Endothelial cell of umbilical vein (primary cell): ENCODE measurements at regions of chr4 and their contacts with region 1.

Region 1: DNA sequence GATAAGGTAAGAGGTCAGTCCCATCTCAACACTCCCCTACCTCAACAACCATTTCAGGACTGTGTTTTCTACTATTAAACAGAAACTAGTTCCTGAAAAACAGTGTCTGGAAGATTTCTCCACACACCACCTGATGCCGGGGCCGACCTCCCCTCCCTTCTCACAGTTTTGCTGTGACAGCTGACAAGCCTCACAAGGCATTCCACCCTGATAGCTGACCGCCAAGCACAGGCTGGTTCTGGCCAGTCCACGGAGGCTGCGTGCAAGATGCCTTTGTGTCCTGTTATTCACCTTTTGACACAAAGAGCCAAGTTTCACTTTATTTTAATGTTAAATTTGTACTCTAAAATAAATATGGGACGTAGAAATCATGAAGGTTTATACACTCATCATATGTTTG is 758.6 kb downstream of the PDHA2 start:
- DNase-seq: no peak
- H3K4me3 ChIP-seq: no peak overlapping the region
- H3K27ac ChIP-seq: no peak overlapping the region
- H3K4me1 ChIP-seq: no peaks in the 10 kb centered on the region
- H3K27me3 ChIP-seq: no peaks in the 10 kb centered on the region
- CTCF ChIP-seq: no peak
- POLR2A ChIP-seq: no peak

Region 2: GRCh38 chr4:94739741-94740140 is 1858.7 kb before region 1 on chr4:
- CTCF ChIA-PET with region 1: no interaction called
- POLR2A ChIA-PET with region 1: no interaction called
- dilution Hi-C with region 1: no loop called
- intact Hi-C with region 1: loop called (anchors 5 kb)
- DNase-seq: no peak
- H3K4me3 ChIP-seq: no peak overlapping the region
- H3K27ac ChIP-seq: no peak overlapping the region
- H3K4me1 ChIP-seq: no peaks in the 10 kb centered on the region
- H3K27me3 ChIP-seq: no peaks in the 10 kb centered on the region
- CTCF ChIP-seq: no peak
- POLR2A ChIP-seq: no peak

Region 3: DNA sequence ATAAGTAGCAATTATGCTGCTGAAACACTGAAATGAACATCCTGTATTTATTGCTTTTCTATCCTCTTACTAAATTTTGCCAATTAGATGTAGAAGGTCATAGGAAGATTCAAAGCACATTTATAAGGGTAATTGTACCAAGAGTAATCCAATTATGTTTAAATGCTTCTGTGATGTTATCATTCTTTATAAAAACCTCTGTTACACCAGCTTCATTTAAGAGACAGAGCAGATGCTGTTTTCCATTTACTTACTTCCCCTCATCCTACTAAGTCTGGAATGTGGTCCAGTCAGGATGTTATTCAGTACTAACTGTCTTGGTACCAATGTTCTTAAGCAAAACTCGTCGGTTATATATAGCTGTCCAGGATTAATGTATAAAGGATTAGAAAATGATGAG is 218.9 kb before region 1 on chr4:
- CTCF ChIA-PET with region 1: no interaction called
- POLR2A ChIA-PET with region 1: no interaction called
- dilution Hi-C with region 1: no loop called
- intact Hi-C with region 1: no loop called
- DNase-seq: no peak
- H3K4me3 ChIP-seq: no peak overlapping the region
- H3K27ac ChIP-seq: no peak overlapping the region
- H3K4me1 ChIP-seq: no peaks in the 10 kb centered on the region
- H3K27me3 ChIP-seq: no peaks in the 10 kb centered on the region
- CTCF ChIP-seq: no peak
- POLR2A ChIP-seq: no peak

Region 4: DNA sequence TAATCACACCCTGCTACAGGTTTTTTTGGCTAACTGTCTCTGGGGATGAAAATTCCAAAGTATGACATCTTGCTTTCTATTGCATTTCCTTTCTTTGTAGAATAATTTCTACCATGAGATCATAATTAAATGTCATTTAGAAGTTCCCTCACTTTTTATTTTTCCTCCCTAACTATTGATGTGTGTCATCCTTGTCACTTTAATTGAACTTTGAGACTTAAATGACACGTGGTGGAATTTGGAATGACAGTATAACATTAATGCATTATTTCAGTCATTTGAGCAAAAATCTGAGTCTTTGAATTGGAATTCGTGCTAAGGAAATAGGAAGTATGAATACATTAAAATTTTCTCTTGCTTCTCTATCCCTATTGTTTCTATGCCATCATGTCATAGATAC is 13.2 kb before region 1 on chr4:
- CTCF ChIA-PET with region 1: no interaction called
- POLR2A ChIA-PET with region 1: no interaction called
- dilution Hi-C with region 1: no loop called
- intact Hi-C with region 1: no loop called
- DNase-seq: no peak
- H3K4me3 ChIP-seq: no peak overlapping the region
- H3K27ac ChIP-seq: no peak overlapping the region
- H3K4me1 ChIP-seq: no peaks in the 10 kb centered on the region
- H3K27me3 ChIP-seq: peaks cover 0 to 2% of the 10 kb centered on the region in 2 experiments
- CTCF ChIP-seq: no peak
- POLR2A ChIP-seq: no peak

Region 5: GRCh38 chr4:96856492-96856891 is 258.0 kb after region 1 on chr4:
- CTCF ChIA-PET with region 1: no interaction called
- POLR2A ChIA-PET with region 1: no interaction called
- dilution Hi-C with region 1: no loop called
- intact Hi-C with region 1: no loop called
- DNase-seq: no peak
- H3K4me3 ChIP-seq: no peak overlapping the region
- H3K27ac ChIP-seq: no peak overlapping the region
- H3K4me1 ChIP-seq: no peaks in the 10 kb centered on the region
- H3K27me3 ChIP-seq: no peaks in the 10 kb centered on the region
- CTCF ChIP-seq: no peak
- POLR2A ChIP-seq: no peak